Tibial artery (tissue), 4 donors: ENCODE measurements at regions of chr1 and their contacts with region 1.

Region 1: GRCh38 chr1:183327434-183328290 is 90.5 kb downstream of the NMNAT2 start:
- DNase-seq: peak; percentile 45 to 76
- H3K4me3 ChIP-seq: no peak overlapping the region
- H3K27ac ChIP-seq: peak overlapping the region; percentile 70 to 79
- H3K4me1 ChIP-seq: peaks cover 0 to 32% (median 17%) of the 10 kb centered on the region in 4 donors
- H3K27me3 ChIP-seq: no peaks in the 10 kb centered on the region
- CTCF ChIP-seq: no peak

Region 2: DNA sequence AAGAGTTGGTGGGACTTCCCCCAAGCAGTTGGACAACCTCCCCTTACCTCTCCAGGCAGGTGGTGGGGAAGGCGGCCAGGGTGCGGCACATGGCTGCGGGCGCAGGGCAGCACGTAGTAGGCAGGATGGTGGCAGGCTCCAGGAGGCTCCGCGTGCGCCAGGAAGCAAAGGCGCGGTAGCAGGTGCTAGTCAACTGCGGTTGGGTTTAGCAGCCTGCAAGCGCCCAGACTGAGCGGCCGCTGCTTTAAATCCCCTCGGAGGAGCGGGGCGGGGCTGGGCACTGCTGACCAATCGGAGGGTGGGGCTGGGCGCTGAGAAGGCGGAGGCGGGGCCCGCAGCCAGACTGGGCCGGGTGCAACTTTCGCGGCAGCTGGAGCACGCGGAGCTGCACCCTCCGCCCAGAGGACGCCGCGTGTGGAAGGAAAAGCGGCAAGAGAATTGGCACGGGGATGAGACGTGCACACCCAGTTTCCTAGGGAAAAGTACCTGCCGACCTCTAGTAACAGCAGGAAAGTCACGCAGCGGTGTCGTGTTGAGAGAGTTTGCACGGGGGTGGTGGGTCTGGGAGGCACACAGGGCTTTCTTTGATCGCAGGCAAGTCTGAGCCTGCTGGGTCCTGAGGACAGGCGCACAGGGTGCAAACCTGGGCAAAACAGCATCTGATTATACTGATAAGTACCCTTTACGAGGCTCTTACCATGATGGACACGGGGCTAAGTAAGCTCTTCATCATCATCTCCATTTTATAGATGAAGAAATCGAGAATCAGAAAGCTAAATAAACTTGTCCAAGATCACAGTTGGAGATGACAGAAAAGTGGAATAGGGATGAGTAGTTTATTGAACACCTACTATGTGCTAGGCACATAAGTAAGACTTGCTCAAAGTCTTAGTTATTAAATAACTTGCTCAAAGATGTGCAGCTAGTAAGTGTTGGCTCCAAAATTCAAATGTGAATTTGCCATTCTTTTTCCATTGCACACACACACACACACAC is 723.2 kb before region 1 on chr1 and contains the start of gene RGS16:
- intact Hi-C with region 1: loop called (anchors 5 kb)
- DNase-seq: peak; percentile 95 to 97
- H3K4me3 ChIP-seq: peak within 1 kb of the TSS; percentile 48 to 57
- H3K27ac ChIP-seq: peak within 1 kb of the TSS; percentile 48 to 58
- H3K4me1 ChIP-seq: peaks cover 0 to 38% (median 22%) of the 10 kb centered on the region in 4 donors
- H3K27me3 ChIP-seq: no peaks in the 10 kb centered on the region
- CTCF ChIP-seq: no peak

Region 3: GRCh38 chr1:183234660-183235476 is 92.8 kb before region 1 on chr1:
- intact Hi-C with region 1: loop called (anchors 10 kb)
- DNase-seq: peak; percentile 90
- H3K4me3 ChIP-seq: peak overlapping the region; percentile 46 to 49
- H3K27ac ChIP-seq: peak overlapping the region; percentile 83 to 86
- H3K4me1 ChIP-seq: peaks cover 0 to 27% (median 13%) of the 10 kb centered on the region in 4 donors
- H3K27me3 ChIP-seq: no peaks in the 10 kb centered on the region
- CTCF ChIP-seq: peak; percentile 54 to 71